Activated naive CD4-positive, alpha-beta T cell treated with anti-CD3 and anti-CD28 coated beads for 36 hours (primary cell): ENCODE measurements at regions of chrX and their contacts with region 1.

Region 1: GRCh38 chrX:46325312-46325877 is 219.8 kb downstream of the ZNF674 start:
- DNase-seq: peak; percentile 67
- H3K4me3 Mint-ChIP-seq: no peak overlapping the region
- H3K27ac Mint-ChIP-seq: peak overlapping the region; percentile 83
- H3K4me1 Mint-ChIP-seq: peaks cover 71% of the 10 kb centered on the region
- H3K27me3 Mint-ChIP-seq: no peaks in the 10 kb centered on the region

Region 2: DNA sequence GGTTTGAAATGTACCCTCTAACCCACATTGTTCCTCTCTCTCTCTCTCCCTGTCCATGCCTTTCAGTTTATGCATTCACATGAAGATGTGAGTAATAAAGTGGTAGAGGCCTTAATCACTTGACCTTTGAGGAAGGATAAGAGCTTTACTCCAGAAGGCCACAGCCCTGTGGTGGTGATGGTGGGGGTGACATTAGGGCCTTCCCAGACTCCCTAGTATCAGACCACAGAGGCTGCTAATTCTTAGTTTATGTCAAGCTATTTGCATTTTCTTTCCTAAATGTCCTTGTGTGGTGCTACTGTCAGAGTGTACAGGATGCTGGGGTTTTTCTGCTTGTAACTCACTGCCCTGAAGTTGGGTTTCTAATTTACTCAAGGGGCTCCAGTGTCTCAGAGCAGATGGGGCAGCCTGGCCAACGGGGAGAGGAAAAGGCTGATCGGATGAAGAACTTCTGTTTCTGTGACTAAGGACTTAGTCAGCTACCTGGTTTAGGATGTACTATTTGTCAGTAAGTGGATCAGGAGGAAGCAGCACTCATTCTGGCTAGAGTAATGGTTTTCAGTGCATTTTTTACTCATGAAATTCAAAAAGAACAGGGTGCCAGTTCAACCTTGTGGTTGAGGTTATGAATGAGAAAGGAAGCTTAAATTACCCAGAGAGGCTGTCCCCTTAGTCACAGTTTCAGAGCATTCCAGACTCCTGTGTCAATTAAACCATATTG is 615.2 kb before region 1 on chrX:
- CTCF ChIA-PET with region 1: no interaction called
- intact Hi-C with region 1: loop called (anchors 5 kb)
- DNase-seq: peak; percentile 71
- H3K4me3 Mint-ChIP-seq: no peak overlapping the region
- H3K27ac Mint-ChIP-seq: peak overlapping the region; percentile 69
- H3K4me1 Mint-ChIP-seq: peaks cover 42% of the 10 kb centered on the region
- H3K27me3 Mint-ChIP-seq: no peaks in the 10 kb centered on the region

Region 3: GRCh38 chrX:45801554-45801953 is 523.8 kb before region 1 on chrX:
- CTCF ChIA-PET with region 1: no interaction called
- intact Hi-C with region 1: loop called (anchors 5 kb)
- DNase-seq: no peak
- H3K4me3 Mint-ChIP-seq: no peak overlapping the region
- H3K27ac Mint-ChIP-seq: peak overlapping the region; percentile 70
- H3K4me1 Mint-ChIP-seq: peaks cover 75% of the 10 kb centered on the region
- H3K27me3 Mint-ChIP-seq: no peaks in the 10 kb centered on the region

Region 4: DNA sequence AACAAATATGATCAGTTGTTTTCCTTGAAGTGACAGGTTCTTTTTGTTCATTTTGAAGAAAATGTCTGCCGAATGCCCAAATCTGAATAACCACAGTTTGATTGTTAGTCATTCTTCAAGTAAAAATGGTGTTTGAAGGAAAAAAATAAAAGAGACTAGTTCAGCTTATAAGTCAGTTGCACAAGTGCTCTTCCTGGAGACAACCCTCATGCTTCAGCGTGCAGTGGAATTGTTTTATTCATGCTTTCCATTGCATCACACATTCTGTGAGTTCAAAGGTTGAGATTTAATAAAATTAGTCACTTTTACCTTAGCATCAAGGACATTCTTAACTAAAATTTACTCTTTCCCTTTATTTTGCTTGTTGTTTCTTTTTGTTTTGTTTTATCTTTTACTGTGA is 185.1 kb before region 1 on chrX:
- CTCF ChIA-PET with region 1: no interaction called
- intact Hi-C with region 1: loop called (anchors 5 kb)
- DNase-seq: peak; percentile 46
- H3K4me3 Mint-ChIP-seq: no peak overlapping the region
- H3K27ac Mint-ChIP-seq: peak overlapping the region; percentile 69
- H3K4me1 Mint-ChIP-seq: peaks cover 16% of the 10 kb centered on the region
- H3K27me3 Mint-ChIP-seq: no peaks in the 10 kb centered on the region

Region 5: DNA sequence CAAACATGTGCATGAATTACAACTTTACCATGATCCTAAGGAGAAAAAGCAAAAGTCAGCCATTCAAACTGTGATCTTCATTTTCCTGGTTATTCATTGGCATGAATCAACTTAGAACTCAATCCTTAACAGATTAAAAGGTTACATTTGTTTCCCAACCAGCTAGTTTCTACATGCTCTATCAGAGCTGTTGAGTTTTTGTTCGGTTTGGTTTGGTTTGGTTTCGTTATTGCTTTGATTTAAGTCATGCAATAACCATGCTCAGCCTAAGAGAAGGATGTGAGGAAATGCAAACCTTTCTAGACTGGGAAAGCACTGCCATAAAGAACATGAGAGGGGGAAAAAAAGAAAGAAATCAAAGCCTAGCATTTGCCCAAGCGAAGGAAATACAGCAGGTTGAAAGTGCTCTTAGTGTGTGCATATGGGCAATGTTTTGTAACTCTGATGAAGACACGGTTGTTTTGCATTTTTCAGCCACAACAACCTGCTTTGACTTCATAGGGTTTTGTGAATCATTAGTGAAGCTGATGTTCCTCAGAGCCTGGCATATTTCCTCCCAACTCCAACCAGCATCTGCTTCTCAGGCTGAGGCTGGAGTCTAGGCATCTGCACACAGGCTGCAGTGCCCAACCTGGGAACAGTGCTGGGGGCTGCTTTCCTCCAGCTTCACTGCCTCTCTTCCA is 14.4 kb before region 1 on chrX:
- CTCF ChIA-PET with region 1: no interaction called
- intact Hi-C with region 1: loop called (anchors 1 kb)
- DNase-seq: no peak
- H3K4me3 Mint-ChIP-seq: peak overlapping the region; percentile 38
- H3K27ac Mint-ChIP-seq: peak overlapping the region; percentile 77
- H3K4me1 Mint-ChIP-seq: peaks cover 18% of the 10 kb centered on the region
- H3K27me3 Mint-ChIP-seq: no peaks in the 10 kb centered on the region

Region 6: GRCh38 chrX:46628460-46629371 is 303.3 kb after region 1 on chrX:
- CTCF ChIA-PET with region 1: no interaction called
- intact Hi-C with region 1: loop called (anchors 10 kb)
- DNase-seq: peak; percentile 6
- H3K4me3 Mint-ChIP-seq: no peak overlapping the region
- H3K27ac Mint-ChIP-seq: no peak overlapping the region
- H3K4me1 Mint-ChIP-seq: peaks cover 24% of the 10 kb centered on the region
- H3K27me3 Mint-ChIP-seq: no peaks in the 10 kb centered on the region